ENCODE measurements at regions of chr5 and their contacts with region 1.

Region 1: DNA sequence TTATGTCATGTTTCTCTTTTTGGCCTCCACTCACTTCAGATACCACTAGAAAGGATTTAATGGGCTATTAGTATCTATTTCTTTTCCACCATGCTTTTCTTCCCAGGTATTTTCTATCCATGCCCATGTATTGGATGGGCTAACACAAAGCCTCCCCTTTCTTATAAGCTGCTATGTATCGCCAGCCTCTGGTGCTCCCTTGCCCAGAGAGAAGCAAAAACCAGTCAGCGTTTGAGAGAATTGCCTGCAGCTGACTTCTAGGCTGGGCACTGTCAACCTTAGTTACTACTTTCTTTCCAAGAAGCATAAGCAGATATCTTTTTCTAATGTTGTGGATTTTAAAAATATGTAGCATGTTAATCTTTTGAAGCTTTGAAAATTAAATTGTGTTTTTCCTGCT is 30.2 kb upstream of the HSPB3 start:
- DNase-seq: no peak
- H3K4me3 ChIP-seq: no peak overlapping the region
- H3K27ac ChIP-seq: no peak overlapping the region
- H3K4me1 ChIP-seq: no peaks in the 10 kb centered on the region
- H3K27me3 ChIP-seq: no peaks in the 10 kb centered on the region
- CTCF ChIP-seq: no peak

Region 2: GRCh38 chr5:53963948-53964347 is 461.3 kb before region 1 on chr5:
- CTCF ChIA-PET with region 1: no interaction called
- POLR2A ChIA-PET with region 1: no interaction called
- intact Hi-C with region 1: no loop called
- DNase-seq: no peak
- H3K4me3 ChIP-seq: no peak overlapping the region
- H3K27ac ChIP-seq: no peak overlapping the region
- H3K4me1 ChIP-seq: no peaks in the 10 kb centered on the region
- H3K27me3 ChIP-seq: no peaks in the 10 kb centered on the region
- CTCF ChIP-seq: no peak

Region 3: DNA sequence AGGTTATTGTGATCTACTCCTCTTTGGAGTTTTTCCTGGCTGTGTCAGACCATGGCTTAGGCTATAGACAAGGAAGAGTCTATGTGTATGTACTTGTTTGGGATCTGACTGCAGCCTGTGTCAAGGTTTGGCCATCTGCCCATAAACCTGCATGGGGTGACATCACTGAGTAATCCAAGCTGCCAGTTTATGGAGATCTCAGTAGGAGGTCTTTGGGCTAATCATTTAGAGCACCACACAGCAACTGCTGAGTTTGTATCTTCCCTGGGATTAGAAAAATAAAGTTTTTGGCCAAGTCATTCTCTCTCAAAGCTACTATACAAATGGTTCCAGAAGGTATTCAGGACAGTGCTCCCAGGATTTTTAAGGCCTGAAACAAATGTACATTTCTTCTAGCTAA is 35.2 kb before region 1 on chr5:
- CTCF ChIA-PET with region 1: no interaction called
- POLR2A ChIA-PET with region 1: no interaction called
- intact Hi-C with region 1: no loop called
- DNase-seq: peak; percentile 97
- H3K4me3 ChIP-seq: no peak overlapping the region
- H3K27ac ChIP-seq: peak overlapping the region; percentile 88
- H3K4me1 ChIP-seq: peaks cover 35% of the 10 kb centered on the region
- H3K27me3 ChIP-seq: no peaks in the 10 kb centered on the region
- CTCF ChIP-seq: no peak

Region 4: DNA sequence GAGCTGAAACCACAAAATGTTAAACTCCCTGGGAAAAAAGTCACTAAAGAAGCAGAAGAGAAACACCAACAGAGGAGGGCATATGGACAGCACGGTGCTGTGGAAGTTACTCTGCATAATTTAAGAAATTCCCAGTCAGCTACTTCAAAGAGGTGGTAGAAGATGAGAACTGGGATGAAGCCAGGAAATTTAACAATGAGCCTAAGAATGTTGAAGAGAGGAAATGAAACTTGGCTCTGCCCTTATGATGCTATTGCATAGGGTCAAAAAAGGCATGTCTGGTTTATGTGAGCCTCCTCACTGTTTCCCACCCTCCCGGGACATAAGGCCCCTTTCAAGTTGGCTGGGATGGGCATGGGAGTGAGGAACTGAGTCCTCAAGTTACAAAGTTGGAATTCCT is 66.9 kb after region 1 on chr5:
- CTCF ChIA-PET with region 1: interaction called, 12 read pairs
- POLR2A ChIA-PET with region 1: no interaction called
- intact Hi-C with region 1: no loop called
- DNase-seq: peak; percentile 17
- H3K4me3 ChIP-seq: no peak overlapping the region
- H3K27ac ChIP-seq: no peak overlapping the region
- H3K4me1 ChIP-seq: peaks cover 5% of the 10 kb centered on the region
- H3K27me3 ChIP-seq: no peaks in the 10 kb centered on the region
- CTCF ChIP-seq: no peak

Measured in A673 (cell line).